ENCODE measurements at regions of chr2 and their contacts with region 1.

Region 1: DNA sequence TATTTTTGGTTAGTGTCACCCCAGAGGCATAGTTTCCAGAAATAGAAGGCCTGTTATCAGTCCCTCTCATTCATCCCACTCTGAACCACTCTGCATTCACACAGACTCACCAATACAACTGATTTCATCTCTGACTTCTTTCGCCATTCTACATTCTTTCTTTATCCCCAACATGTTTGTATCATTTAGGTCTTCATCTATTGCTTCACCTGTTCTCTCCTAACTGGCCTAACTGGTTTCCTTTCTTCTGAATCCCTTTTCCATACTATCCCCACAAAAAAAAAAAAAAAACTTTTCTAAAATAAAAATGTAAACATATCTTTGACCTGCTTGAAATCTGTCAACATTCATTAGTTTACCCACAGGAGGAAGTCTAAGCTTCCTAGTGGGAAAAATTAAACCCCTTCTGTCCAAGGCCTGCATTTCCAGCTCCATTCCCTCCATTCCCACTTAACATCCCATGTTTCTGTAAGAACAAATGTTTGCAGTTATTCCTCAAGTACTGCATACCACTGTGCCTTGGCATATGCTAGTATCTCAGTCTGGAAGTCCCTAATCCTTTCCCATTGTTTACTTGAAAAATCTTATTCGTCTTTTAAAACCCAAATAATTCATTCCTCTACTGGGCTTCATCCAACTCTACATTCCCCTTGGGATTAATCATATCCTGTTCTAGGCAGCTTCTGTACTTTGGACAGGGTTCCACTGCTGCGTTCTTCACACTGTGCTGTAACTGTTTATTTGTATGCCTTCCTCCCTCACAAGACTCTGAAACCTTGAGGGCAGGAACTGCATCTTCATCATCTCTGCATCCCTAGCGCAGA is 68.5 kb downstream of the FIGN start:
- DNase-seq: peak; percentile 96
- H3K4me3 ChIP-seq: no peak overlapping the region
- H3K27ac ChIP-seq: peak overlapping the region; percentile 9
- H3K4me1 ChIP-seq: peaks cover 28% of the 10 kb centered on the region
- H3K27me3 ChIP-seq: no peaks in the 10 kb centered on the region
- CTCF ChIP-seq: no peak
- POLR2A ChIP-seq: no peak

Region 2: GRCh38 chr2:163652751-163653150 is 14.5 kb before region 1 on chr2:
- CTCF ChIA-PET with region 1: interaction called, 4 read pairs
- POLR2A ChIA-PET with region 1: interaction called, 7 read pairs
- dilution Hi-C with region 1: no loop called
- intact Hi-C with region 1: loop called (anchors 2 kb)
- DNase-seq: peak; percentile 70
- H3K4me3 ChIP-seq: no peak overlapping the region
- H3K27ac ChIP-seq: peak overlapping the region; percentile 50
- H3K4me1 ChIP-seq: peaks cover 24% of the 10 kb centered on the region
- H3K27me3 ChIP-seq: no peaks in the 10 kb centered on the region
- CTCF ChIP-seq: no peak
- POLR2A ChIP-seq: no peak

Region 3: GRCh38 chr2:163682692-163683091 is 15.4 kb after region 1 on chr2:
- CTCF ChIA-PET with region 1: interaction called, 5 read pairs
- POLR2A ChIA-PET with region 1: no interaction called
- dilution Hi-C with region 1: no loop called
- intact Hi-C with region 1: loop called (anchors 1 kb)
- DNase-seq: peak; percentile 66
- H3K4me3 ChIP-seq: no peak overlapping the region
- H3K27ac ChIP-seq: no peak overlapping the region
- H3K4me1 ChIP-seq: peaks cover 20% of the 10 kb centered on the region
- H3K27me3 ChIP-seq: no peaks in the 10 kb centered on the region
- CTCF ChIP-seq: peak; percentile 24 to 31
- POLR2A ChIP-seq: no peak

Region 4: DNA sequence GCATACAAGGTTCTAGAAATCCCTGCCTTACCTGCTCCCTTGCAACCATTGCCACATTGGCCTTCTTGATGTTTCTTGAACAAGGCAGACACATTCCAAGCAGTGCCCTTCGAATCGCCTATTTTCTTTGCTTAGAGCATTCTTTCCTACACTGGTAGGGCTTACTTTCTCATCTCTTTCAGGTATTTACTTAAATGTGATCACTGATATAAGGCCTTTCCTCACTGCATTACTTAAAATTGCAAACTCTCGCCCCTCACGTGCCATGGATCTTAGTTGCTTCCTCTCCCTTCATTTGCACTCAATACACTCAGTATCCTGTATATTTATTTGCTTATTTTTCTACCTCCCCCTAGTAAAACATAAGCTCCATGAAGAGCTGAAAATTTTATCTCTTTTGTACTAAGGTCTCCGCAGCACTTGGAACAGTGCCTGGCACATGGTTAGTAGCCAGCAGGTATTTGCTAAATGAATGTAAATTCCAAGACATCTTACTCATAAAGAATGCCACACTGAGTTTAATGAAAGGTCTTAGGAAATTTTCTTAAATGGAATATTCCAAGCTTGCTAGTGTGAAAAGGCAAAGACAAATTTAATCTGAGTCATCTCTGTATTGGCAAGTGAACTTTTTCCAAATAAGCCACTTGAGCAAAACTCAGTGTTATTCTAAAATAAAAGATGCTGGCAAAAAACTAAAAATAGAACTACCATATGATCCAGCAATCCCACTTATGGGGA is 110.9 kb after region 1 on chr2:
- CTCF ChIA-PET with region 1: no interaction called
- POLR2A ChIA-PET with region 1: no interaction called
- dilution Hi-C with region 1: no loop called
- intact Hi-C with region 1: loop called (anchors 5 kb)
- DNase-seq: peak; percentile 68
- H3K4me3 ChIP-seq: no peak overlapping the region
- H3K27ac ChIP-seq: peak overlapping the region; percentile 61
- H3K4me1 ChIP-seq: peaks cover 29% of the 10 kb centered on the region
- H3K27me3 ChIP-seq: no peaks in the 10 kb centered on the region
- CTCF ChIP-seq: no peak
- POLR2A ChIP-seq: no peak

Region 5: GRCh38 chr2:164114931-164115330 is 447.7 kb after region 1 on chr2:
- CTCF ChIA-PET with region 1: no interaction called
- POLR2A ChIA-PET with region 1: no interaction called
- dilution Hi-C with region 1: no loop called
- intact Hi-C with region 1: no loop called
- DNase-seq: no peak
- H3K4me3 ChIP-seq: no peak overlapping the region
- H3K27ac ChIP-seq: no peak overlapping the region
- H3K4me1 ChIP-seq: no peaks in the 10 kb centered on the region
- H3K27me3 ChIP-seq: no peaks in the 10 kb centered on the region
- CTCF ChIP-seq: no peak
- POLR2A ChIP-seq: no peak

Region 6: DNA sequence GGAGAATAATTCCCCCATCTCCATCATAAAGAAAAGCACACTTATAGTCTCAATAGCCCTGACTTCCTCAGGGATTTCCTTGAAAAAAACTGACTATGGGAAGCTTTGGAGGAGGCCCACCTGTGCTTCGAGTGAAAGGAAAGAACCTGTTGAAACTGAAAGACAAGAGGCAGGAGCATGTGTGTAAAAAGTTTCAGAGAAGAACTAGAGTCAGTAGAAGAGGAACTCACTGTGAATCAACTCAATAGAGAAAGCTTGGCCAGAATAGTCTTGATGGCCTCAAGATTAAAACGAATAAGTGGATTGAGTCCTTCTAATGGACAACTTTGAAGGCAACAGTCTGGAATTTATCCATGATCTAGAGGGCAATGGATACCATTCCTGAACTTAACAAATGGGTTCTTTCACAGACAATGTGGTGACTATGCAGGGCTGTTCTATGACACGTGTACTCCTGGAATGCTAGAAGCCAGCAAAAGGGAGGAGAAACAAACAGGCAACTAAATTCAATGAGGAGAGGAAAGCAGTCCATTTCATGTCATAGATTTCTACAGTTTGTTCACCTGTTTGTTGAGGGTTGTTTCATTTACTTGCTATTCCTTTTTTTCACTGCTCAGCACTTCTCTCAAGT is 511.7 kb after region 1 on chr2:
- CTCF ChIA-PET with region 1: no interaction called
- POLR2A ChIA-PET with region 1: no interaction called
- dilution Hi-C with region 1: no loop called
- intact Hi-C with region 1: no loop called
- DNase-seq: no peak
- H3K4me3 ChIP-seq: no peak overlapping the region
- H3K27ac ChIP-seq: no peak overlapping the region
- H3K4me1 ChIP-seq: no peaks in the 10 kb centered on the region
- H3K27me3 ChIP-seq: no peaks in the 10 kb centered on the region
- CTCF ChIP-seq: no peak
- POLR2A ChIP-seq: no peak